Right lobe of liver (tissue), 6 donors: ENCODE measurements at regions of chr21 and their contacts with region 1.

Region 1: GRCh38 chr21:37758982-37759381 is 157.3 kb downstream of the KCNJ6 start:
- DNase-seq: peak; percentile 58 to 72 (median 67)
- ATAC-seq: peak; percentile 82 to 99 (median 90)
- H3K4me3 ChIP-seq: no peak overlapping the region
- H3K27ac ChIP-seq: no peak overlapping the region
- H3K4me1 ChIP-seq: no peaks in the 10 kb centered on the region
- H3K27me3 ChIP-seq: no peaks in the 10 kb centered on the region
- CTCF ChIP-seq: peak; percentile 47 to 86 (median 57)
- POLR2A ChIP-seq: no peak

Region 2: GRCh38 chr21:37642493-37642892 is 116.5 kb before region 1 on chr21:
- intact Hi-C with region 1: no loop called
- DNase-seq: no peak
- ATAC-seq: peak; percentile 66 to 81 (median 72)
- H3K4me3 ChIP-seq: no peak overlapping the region
- H3K27ac ChIP-seq: no peak overlapping the region
- H3K4me1 ChIP-seq: no peaks in the 10 kb centered on the region
- H3K27me3 ChIP-seq: no peaks in the 10 kb centered on the region
- CTCF ChIP-seq: peak; percentile 27 to 50 (median 40)
- POLR2A ChIP-seq: no peak

Region 3: DNA sequence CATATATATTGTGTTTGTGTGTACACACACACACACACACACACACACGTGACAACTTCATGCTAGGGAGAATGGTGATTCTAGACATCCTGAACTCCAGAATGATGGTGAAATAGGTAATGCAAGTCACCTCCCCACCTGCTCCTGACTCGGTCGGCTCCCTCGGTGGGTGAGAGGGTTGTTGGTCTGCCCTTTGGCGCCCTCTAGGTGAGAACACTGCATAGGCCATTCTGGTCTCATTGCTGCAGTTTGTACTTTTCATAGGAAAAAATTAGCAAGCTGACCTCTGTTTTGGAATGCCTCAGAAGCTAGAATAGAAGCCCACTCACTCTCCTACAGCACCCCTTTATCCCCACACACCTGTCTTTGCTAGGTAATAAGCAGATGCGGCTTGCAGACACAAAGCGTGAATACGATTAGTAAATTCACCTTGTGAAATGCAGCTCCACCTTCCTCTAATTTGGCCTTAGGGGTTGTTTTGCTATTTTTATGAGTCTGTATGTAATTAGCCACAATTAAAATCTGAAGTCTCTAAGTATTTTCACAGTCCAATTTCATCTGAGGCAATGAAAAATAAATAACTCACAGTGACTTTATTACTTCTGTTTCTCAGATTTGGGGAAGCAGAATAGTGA is 367.8 kb after region 1 on chr21:
- intact Hi-C with region 1: loop called in 1 of 2 experiments (anchors 10 kb)
- DNase-seq: peak in 2 of 3 donors; percentile 57
- ATAC-seq: peak; percentile 84 to 93 (median 90)
- H3K4me3 ChIP-seq: no peak overlapping the region
- H3K27ac ChIP-seq: no peak overlapping the region
- H3K4me1 ChIP-seq: no peaks in the 10 kb centered on the region
- H3K27me3 ChIP-seq: no peaks in the 10 kb centered on the region
- CTCF ChIP-seq: peak; percentile 45 to 77 (median 74)
- POLR2A ChIP-seq: no peak

Region 4: GRCh38 chr21:38505654-38506515 is 746.9 kb after region 1 on chr21:
- intact Hi-C with region 1: no loop called
- DNase-seq: no peak
- ATAC-seq: peak; percentile 92 to 97 (median 94)
- H3K4me3 ChIP-seq: no peak overlapping the region
- H3K27ac ChIP-seq: no peak overlapping the region
- H3K4me1 ChIP-seq: peaks cover 0 to 5% (median 0%) of the 10 kb centered on the region in 4 donors
- H3K27me3 ChIP-seq: no peaks in the 10 kb centered on the region
- CTCF ChIP-seq: peak; percentile 60 to 82 (median 76)
- POLR2A ChIP-seq: no peak